AG04449 (cell line): ENCODE measurements at regions of chr12 and their contacts with region 1.

Region 1: DNA sequence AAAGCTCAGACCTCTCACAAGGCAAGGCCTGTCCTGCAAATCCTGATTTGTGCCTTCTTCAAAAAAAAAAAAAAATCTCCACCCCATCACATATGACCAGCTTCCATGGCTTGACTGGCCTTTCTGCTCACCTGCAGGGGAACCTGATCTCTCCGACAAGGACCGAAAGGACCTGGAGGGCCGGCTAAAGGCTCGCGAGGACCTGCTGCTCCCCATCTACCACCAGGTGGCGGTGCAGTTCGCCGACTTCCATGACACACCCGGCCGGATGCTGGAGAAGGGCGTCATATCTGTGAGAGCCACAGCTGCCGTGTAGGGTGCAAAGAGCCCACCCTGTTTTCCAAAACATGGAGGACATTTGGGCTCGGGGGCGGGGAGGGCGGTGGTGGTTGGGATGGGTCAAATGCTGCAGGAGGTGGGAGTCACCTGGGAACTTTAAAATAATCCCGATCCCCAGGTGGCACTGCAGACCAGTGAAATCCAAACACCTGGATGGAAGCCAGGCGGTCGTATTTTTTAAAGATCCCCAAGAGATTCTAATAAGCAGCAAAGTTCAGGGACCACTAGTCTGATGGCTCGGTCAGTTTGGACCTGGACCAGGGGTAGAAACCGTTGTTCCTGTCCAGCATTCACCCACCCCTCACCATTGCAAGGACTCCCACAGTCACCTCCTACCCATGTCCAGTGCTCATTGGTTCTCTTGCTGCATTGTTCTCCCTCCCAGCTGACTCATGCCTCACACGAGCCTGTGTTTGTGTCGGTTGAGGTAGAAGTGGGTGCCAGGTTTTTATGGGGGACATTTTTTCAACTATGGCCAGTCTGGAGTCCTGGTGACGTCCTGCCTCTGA is 44.8 kb downstream of the FOXN4 start:
- DNase-seq: no peak
- H3K4me3 ChIP-seq: no peak overlapping the region
- CTCF ChIP-seq: peak; percentile 87

Region 2: DNA sequence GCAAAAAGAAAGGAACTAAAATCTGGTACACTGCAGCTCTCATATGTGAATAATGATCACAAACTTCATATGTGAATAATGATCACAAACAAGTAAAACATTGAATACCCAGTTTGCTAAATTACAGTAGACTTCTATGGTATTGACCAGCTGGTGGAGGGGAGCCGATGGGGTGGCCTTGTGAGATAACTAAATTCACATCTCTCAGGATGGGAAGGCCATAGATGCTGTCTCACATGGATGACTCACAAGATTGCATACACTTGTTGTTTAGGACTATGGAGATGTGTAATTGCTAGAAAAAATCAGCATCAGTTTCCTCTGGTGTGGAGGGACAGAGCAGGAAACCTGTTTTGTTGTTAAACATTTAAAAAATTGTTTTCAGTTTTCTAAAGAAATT is 98.7 kb before region 1 on chr12:
- CTCF ChIA-PET with region 1: no interaction called
- POLR2A ChIA-PET with region 1: no interaction called
- DNase-seq: no peak
- H3K4me3 ChIP-seq: no peak overlapping the region
- CTCF ChIP-seq: no peak

Region 3: DNA sequence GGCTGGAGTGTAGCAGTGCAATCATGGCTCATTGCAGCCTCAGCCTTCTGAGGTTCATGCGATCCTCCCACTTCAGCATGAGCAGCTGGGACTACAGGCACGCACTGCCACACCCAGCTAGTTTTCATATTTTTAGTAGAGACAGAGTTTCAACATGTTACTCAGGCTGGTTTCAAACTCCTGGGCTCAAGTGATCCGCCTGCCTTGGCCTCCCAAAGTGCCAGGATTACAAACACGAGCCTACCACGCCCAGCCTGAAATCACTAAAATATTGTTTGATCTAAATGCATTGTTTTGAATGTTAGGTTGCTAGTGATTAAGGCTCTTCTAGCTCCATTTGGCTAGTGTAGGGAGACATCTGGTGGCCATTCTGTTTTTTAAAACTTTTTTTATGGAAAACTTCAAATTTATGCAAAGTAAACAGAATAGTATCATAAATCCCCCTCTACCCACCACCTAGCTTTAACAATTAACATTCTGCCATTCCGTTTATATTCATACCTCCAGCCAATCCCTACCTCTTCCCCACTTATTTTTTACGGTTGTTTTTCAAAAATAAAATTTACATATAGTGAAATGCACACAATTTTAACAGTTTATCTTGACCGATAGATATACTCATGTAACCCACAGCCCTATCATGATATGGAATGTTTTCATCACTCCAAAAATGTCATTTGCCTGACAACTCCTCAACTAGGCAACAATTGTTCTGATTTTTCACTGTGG is 121.2 kb after region 1 on chr12:
- CTCF ChIA-PET with region 1: interaction called, 22 read pairs
- POLR2A ChIA-PET with region 1: no interaction called
- DNase-seq: no peak
- H3K4me3 ChIP-seq: no peak overlapping the region
- CTCF ChIP-seq: peak; percentile 34